CD8-positive, alpha-beta T cell (primary cell): ENCODE measurements at regions of chr7 and their contacts with region 1.

Region 1: DNA sequence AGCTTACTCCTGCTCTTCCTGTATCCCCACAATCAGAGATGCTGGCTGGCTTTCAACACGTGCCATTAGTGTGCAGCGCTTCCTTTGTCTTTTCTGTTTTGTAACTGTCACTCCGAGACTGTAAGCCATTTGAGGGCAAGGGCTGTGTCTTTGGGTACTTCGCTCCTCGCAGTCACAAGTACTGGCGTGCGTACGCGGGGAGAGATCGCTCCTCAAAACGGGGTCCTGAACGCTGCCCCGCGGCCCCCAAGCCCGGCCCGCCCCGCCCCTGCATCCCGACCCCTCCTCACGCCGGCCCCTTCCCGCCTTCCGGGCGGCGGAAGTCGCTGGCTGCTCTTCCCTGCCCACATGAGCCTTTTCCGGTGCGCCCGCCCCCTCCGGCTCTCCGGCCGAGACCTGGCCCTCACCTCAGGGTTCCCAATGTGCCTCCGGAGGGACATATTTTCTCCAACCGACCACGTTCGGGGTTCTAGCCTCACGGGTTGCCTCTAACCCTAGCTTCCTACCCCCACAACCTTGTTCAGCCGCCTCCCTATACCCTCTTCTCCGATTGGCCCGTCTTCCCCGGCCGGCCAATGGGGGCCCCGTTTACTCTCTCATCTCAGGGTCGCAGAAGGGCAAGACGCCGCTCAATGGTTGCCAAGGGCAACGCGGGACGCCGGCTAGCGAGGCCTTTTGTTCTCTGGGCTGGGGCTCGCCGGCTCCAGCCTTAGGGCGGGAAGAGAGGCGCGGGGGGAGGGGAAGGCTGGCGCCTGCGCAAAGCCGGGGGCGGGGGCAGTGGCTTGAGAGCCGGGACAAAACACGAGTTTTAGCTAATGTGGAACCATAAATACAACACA is at the start of gene CEP41:
- DNase-seq: peak; percentile 82 to 94 (median 89)
- ATAC-seq: peak; percentile 96
- H3K4me3 ChIP-seq: peak within 1 kb of the TSS; percentile 81 to 99
- H3K4me3 Mint-ChIP-seq: peak within 1 kb of the TSS; percentile 99
- H3K27ac ChIP-seq: peak within 1 kb of the TSS; percentile 57 to 75
- H3K27ac Mint-ChIP-seq: peak within 1 kb of the TSS; percentile 97
- H3K4me1 ChIP-seq: peaks cover 31% of the 10 kb centered on the region
- H3K4me1 Mint-ChIP-seq: peaks cover 51% of the 10 kb centered on the region
- H3K27me3 ChIP-seq: no peaks in the 10 kb centered on the region
- H3K27me3 Mint-ChIP-seq: no peaks in the 10 kb centered on the region
- CTCF ChIP-seq: no peak
- total RNA-seq, gene CEP41: 4.8 to 5.5 TPM

Region 2: DNA sequence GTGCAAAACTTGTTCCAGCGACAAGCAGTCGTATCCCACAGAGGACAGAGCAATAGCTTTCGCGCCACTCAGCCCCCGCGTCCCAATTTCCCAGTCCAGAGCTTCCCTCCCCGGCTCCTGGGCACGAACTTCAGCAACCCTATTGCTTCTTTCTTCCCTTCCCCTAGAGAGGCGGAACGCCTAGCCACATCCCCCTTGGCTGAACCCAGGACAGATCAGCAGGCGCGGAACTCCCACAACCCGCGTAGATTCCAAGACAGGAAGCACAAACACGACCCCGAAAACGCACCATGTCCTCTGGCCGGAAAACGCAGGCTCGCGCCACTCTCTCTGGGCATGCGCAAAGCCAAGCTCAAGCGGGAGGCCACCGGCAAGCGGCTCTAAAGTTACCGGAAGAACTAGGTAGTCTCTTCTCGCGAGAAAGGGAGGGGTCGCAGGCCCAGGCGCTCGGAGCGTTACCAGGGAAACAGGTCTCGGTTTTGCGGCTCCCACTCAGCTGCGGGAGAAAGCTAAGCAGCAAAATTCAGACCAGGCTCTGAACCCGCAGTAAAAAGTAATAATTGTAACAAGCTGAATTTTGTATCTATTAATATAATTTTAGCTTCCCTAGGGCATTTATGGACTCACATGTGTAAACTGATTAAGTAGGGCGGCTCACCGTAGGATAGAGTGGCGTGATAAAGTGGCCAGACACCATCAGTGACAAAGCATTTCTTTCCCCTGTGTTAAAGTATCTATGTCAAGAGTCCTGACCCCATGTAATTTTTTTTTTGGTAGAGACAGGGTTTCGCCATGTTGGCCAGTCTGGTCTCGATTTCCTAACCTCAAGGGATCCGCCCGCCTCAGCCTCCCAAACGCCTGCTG is 235.4 kb before region 1 on chr7 and contains the start of gene TMEM209:
- CTCF ChIA-PET with region 1: interaction called, 3 read pairs
- POLR2A ChIA-PET with region 1: interaction called, 5 read pairs
- intact Hi-C with region 1: loop called (anchors 2 to 5 kb)
- DNase-seq: peak; percentile 85 to 97 (median 93)
- ATAC-seq: peak; percentile 96
- H3K4me3 ChIP-seq: peak within 1 kb of the TSS; percentile 95 to 99
- H3K4me3 Mint-ChIP-seq: peak within 1 kb of the TSS; percentile 100
- H3K27ac ChIP-seq: peak within 1 kb of the TSS; percentile 80 to 92
- H3K27ac Mint-ChIP-seq: peak within 1 kb of the TSS; percentile 100
- H3K4me1 ChIP-seq: peaks cover 5% of the 10 kb centered on the region
- H3K4me1 Mint-ChIP-seq: peaks cover 34% of the 10 kb centered on the region
- H3K27me3 ChIP-seq: no peaks in the 10 kb centered on the region
- H3K27me3 Mint-ChIP-seq: no peaks in the 10 kb centered on the region
- CTCF ChIP-seq: no peak
- total RNA-seq, gene TMEM209: 15.7 to 15.9 TPM

Region 3: DNA sequence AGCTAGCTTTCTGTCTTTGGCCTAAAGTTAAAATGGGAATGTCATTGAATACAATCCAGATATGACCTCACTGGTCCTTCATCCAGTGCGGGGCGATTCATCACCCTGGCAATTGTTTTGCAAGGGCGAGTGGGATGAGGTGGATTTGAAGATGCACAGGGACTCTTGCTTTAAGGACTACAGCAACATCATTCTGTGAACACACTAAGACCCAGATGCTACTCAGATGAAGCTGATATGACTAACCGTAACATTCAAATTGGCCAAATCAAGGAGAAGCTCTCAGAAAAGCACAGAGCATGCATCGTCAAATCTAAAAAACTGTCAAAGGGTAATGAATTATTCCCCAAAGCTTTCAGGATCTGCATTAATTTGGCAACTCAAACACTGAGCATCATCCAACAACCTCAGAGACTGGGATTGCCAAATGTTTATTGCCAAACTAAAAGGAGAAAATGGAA is 47.6 kb before region 1 on chr7:
- CTCF ChIA-PET with region 1: no interaction called
- POLR2A ChIA-PET with region 1: interaction called, 7 read pairs
- intact Hi-C with region 1: loop called (anchors 1 to 5 kb)
- DNase-seq: no peak
- ATAC-seq: no peak
- H3K4me3 ChIP-seq: no peak overlapping the region
- H3K4me3 Mint-ChIP-seq: no peak overlapping the region
- H3K27ac ChIP-seq: no peak overlapping the region
- H3K27ac Mint-ChIP-seq: peak overlapping the region; percentile 55
- H3K4me1 ChIP-seq: peaks cover 25% of the 10 kb centered on the region
- H3K4me1 Mint-ChIP-seq: peaks cover 33% of the 10 kb centered on the region
- H3K27me3 ChIP-seq: no peaks in the 10 kb centered on the region
- H3K27me3 Mint-ChIP-seq: no peaks in the 10 kb centered on the region
- CTCF ChIP-seq: no peak

Region 4: GRCh38 chr7:130421684-130422083 is 19.1 kb before region 1 on chr7:
- CTCF ChIA-PET with region 1: interaction called, 4 read pairs
- POLR2A ChIA-PET with region 1: interaction called, 10 read pairs
- intact Hi-C with region 1: no loop called
- DNase-seq: no peak
- ATAC-seq: no peak
- H3K4me3 ChIP-seq: no peak overlapping the region
- H3K4me3 Mint-ChIP-seq: peak overlapping the region; percentile 55
- H3K27ac ChIP-seq: no peak overlapping the region
- H3K27ac Mint-ChIP-seq: peak overlapping the region; percentile 80
- H3K4me1 ChIP-seq: peaks cover 92% of the 10 kb centered on the region
- H3K4me1 Mint-ChIP-seq: peaks cover 72% of the 10 kb centered on the region
- H3K27me3 ChIP-seq: no peaks in the 10 kb centered on the region
- H3K27me3 Mint-ChIP-seq: no peaks in the 10 kb centered on the region
- CTCF ChIP-seq: no peak

Region 5: GRCh38 chr7:130668257-130669084 is 227.7 kb after region 1 on chr7 and contains the start of gene COPG2:
- CTCF ChIA-PET with region 1: no interaction called
- POLR2A ChIA-PET with region 1: no interaction called
- intact Hi-C with region 1: loop called in 1 of 2 experiments (anchors 5 kb)
- DNase-seq: peak; percentile 34 to 87 (median 72)
- ATAC-seq: peak; percentile 81
- H3K4me3 ChIP-seq: peak within 1 kb of the TSS; percentile 73 to 77
- H3K4me3 Mint-ChIP-seq: peak within 1 kb of the TSS; percentile 93
- H3K27ac ChIP-seq: peak within 1 kb of the TSS; percentile 43 to 61
- H3K27ac Mint-ChIP-seq: peak within 1 kb of the TSS; percentile 76
- H3K4me1 ChIP-seq: no peaks in the 10 kb centered on the region
- H3K4me1 Mint-ChIP-seq: peaks cover 20% of the 10 kb centered on the region
- H3K27me3 ChIP-seq: no peaks in the 10 kb centered on the region
- H3K27me3 Mint-ChIP-seq: peaks cover 3% of the 10 kb centered on the region
- CTCF ChIP-seq: no peak
- total RNA-seq, gene COPG2: 2.7 to 3.0 TPM